ENCODE measurements at regions of chr17 and their contacts with region 1.

Region 1: GRCh38 chr17:50865984-50866774 is at the start of gene TOB1:
- DNase-seq: peak; percentile 99
- H3K4me3 ChIP-seq: peak within 1 kb of the TSS; percentile 79 to 90
- H3K27ac ChIP-seq: peak within 1 kb of the TSS; percentile 97 to 100
- H3K4me1 ChIP-seq: peaks cover 7 to 30% of the 10 kb centered on the region in 2 experiments; a peak in 2 of 4 replicates
- H3K27me3 ChIP-seq: no peaks in the 10 kb centered on the region
- CTCF ChIP-seq: no peak
- EP300 ChIP-seq: 0 out of 4 replicates have a peak, but pooled peaks of 1 of the 2 experiments have one; percentile 12
- RAD21 ChIP-seq: no peak; the same call in 1 of the 2 replicates
- polyA plus RNA-seq, gene TOB1: 19.3 and 21.8 TPM in 2 replicates

Region 2: GRCh38 chr17:50596191-50597037 is 269.8 kb before region 1 on chr17:
- CTCF ChIA-PET with region 1: no interaction called
- POLR2A ChIA-PET with region 1: no interaction called
- DNase-seq: no peak
- H3K4me3 ChIP-seq: no peak overlapping the region; a peak in 1 of 4 replicates
- H3K27ac ChIP-seq: no peak overlapping the region
- H3K4me1 ChIP-seq: peaks cover 0 to 47% of the 10 kb centered on the region in 2 experiments; a peak in 2 of 4 replicates
- H3K27me3 ChIP-seq: no peaks in the 10 kb centered on the region
- CTCF ChIP-seq: peak; percentile 25; the same call in 1 of the 2 replicates
- EP300 ChIP-seq: no peak
- RAD21 ChIP-seq: no peak

Region 3: DNA sequence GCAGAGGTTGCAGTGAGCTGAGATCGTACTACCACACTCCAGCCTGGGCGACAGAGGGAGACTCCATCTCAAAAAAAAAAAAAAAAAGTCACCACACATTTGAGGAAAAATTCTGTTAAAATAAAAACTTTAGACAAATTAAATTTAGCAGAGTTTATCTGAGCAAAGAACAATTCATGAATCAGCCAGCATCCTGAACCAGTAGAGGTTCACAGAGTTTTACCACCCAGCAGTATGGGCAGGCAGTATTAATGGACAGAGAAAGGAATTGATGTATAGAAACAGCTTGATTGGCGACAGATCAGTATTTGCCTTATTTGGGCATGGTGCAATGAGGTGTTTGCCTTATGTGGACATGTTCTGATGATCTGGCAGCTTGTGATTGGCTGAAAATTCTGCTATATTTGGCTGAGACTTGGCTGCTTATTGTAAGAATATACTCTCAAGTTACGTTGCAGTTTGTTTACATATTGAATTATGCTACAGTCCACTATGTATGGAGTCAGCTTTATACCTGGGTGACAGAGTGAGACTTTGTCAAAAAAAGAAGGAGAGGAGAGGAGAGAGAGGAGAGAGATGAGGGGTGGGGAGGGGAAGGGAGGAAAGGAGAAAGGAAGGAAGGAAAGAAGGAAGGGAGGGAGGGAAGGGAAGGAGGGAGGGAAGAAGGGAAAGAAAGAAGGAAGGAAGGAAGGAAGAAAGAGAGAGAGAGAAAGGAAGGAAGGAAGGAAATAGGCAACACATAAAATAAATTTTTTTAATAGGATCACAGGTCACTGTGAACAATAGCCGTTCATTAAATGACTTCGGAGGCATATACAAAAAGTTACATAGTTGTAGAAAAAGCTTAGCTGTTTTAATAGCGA is 216.9 kb before region 1 on chr17:
- CTCF ChIA-PET with region 1: no interaction called
- POLR2A ChIA-PET with region 1: no interaction called
- DNase-seq: no peak
- H3K4me3 ChIP-seq: no peak overlapping the region
- H3K27ac ChIP-seq: no peak overlapping the region
- H3K4me1 ChIP-seq: no peaks in the 10 kb centered on the region
- H3K27me3 ChIP-seq: no peaks in the 10 kb centered on the region
- CTCF ChIP-seq: no peak
- EP300 ChIP-seq: no peak
- RAD21 ChIP-seq: no peak

Region 4: DNA sequence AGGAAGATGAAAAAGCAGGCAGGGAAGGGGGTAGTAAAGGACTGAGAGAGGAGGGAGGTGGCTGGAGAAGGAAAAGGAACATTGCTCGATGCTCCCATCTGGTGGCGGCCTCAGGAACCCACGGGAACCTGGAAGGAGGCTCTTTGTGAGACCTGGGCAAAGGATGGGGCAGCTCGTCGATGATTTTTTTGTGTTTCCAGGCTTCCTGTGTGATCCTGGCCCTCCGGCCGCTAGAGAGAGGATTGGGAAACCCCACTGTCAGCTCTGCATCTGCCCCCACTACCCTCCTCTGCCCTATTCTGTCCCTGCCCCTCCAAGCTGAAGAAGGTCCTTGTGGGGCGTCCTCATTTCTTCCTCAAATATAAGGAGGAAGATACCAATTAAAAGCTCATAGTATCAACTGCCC is 24.2 kb before region 1 on chr17:
- CTCF ChIA-PET with region 1: interaction called, 210 read pairs
- POLR2A ChIA-PET with region 1: interaction called, 8 read pairs
- DNase-seq: peak; percentile 97
- H3K4me3 ChIP-seq: no peak overlapping the region; a peak in 1 of 4 replicates
- H3K27ac ChIP-seq: no peak overlapping the region
- H3K4me1 ChIP-seq: peaks cover 3 to 5% of the 10 kb centered on the region in 2 experiments; a peak in 2 of 4 replicates
- H3K27me3 ChIP-seq: no peaks in the 10 kb centered on the region
- CTCF ChIP-seq: peak; percentile 94
- EP300 ChIP-seq: no peak
- RAD21 ChIP-seq: peak; percentile 93

Region 5: GRCh38 chr17:50904521-50905459 is 38.6 kb after region 1 on chr17:
- CTCF ChIA-PET with region 1: interaction called, 62 read pairs
- POLR2A ChIA-PET with region 1: interaction called, 106 read pairs
- DNase-seq: peak; percentile 90
- H3K4me3 ChIP-seq: no peak overlapping the region
- H3K27ac ChIP-seq: peak overlapping the region; percentile 61 to 92; a peak in 3 of 4 replicates
- H3K4me1 ChIP-seq: peaks cover 13 to 42% of the 10 kb centered on the region in 2 experiments
- H3K27me3 ChIP-seq: no peaks in the 10 kb centered on the region
- CTCF ChIP-seq: no peak; the same call in 1 of the 2 replicates
- EP300 ChIP-seq: peak in 1 of 2 experiments; percentile 54; a peak in 2 of 4 replicates
- RAD21 ChIP-seq: peak; percentile 77

Region 6: GRCh38 chr17:50931144-50931908 is 65.1 kb after region 1 on chr17:
- CTCF ChIA-PET with region 1: interaction called, 31 read pairs
- POLR2A ChIA-PET with region 1: interaction called, 166 read pairs
- DNase-seq: peak; percentile 95
- H3K4me3 ChIP-seq: peak overlapping the region; percentile 41 to 62
- H3K27ac ChIP-seq: peak overlapping the region; percentile 93 to 98
- H3K4me1 ChIP-seq: peaks cover 15 to 41% of the 10 kb centered on the region in 2 experiments
- H3K27me3 ChIP-seq: no peaks in the 10 kb centered on the region
- CTCF ChIP-seq: no peak
- EP300 ChIP-seq: peak in 1 of 2 experiments; percentile 45; a peak in 1 of 4 replicates
- RAD21 ChIP-seq: no peak; the same call in 1 of the 2 replicates

Region 7: GRCh38 chr17:50976951-50977472 is 110.8 kb after region 1 on chr17:
- CTCF ChIA-PET with region 1: interaction called, 8 read pairs
- POLR2A ChIA-PET with region 1: interaction called, 34 read pairs
- DNase-seq: no peak
- H3K4me3 ChIP-seq: no peak overlapping the region
- H3K27ac ChIP-seq: peak overlapping the region in 1 of 2 experiments; percentile 26; a peak in 1 of 4 replicates
- H3K4me1 ChIP-seq: peaks cover 10 to 31% of the 10 kb centered on the region in 2 experiments; a peak in 3 of 4 replicates
- H3K27me3 ChIP-seq: no peaks in the 10 kb centered on the region
- CTCF ChIP-seq: no peak
- EP300 ChIP-seq: no peak
- RAD21 ChIP-seq: no peak

Region 8: GRCh38 chr17:51056813-51057510 is 190.8 kb after region 1 on chr17:
- CTCF ChIA-PET with region 1: interaction called, 5 read pairs
- POLR2A ChIA-PET with region 1: interaction called, 11 read pairs
- DNase-seq: peak; percentile 49
- H3K4me3 ChIP-seq: peak overlapping the region in 1 of 2 experiments; percentile 5; a peak in 1 of 4 replicates
- H3K27ac ChIP-seq: peak overlapping the region; percentile 51 to 78
- H3K4me1 ChIP-seq: peaks cover 6 to 10% of the 10 kb centered on the region in 2 experiments; a peak in 3 of 4 replicates
- H3K27me3 ChIP-seq: no peaks in the 10 kb centered on the region
- CTCF ChIP-seq: peak; percentile 98
- EP300 ChIP-seq: 0 out of 4 replicates have a peak, but pooled peaks of 1 of the 2 experiments have one; percentile 6
- RAD21 ChIP-seq: peak; percentile 94

Measured in SK-N-SH (cell line).